CD8-positive, alpha-beta T cell (primary cell): ENCODE measurements at regions of chr10 and their contacts with region 1.

Region 1: DNA sequence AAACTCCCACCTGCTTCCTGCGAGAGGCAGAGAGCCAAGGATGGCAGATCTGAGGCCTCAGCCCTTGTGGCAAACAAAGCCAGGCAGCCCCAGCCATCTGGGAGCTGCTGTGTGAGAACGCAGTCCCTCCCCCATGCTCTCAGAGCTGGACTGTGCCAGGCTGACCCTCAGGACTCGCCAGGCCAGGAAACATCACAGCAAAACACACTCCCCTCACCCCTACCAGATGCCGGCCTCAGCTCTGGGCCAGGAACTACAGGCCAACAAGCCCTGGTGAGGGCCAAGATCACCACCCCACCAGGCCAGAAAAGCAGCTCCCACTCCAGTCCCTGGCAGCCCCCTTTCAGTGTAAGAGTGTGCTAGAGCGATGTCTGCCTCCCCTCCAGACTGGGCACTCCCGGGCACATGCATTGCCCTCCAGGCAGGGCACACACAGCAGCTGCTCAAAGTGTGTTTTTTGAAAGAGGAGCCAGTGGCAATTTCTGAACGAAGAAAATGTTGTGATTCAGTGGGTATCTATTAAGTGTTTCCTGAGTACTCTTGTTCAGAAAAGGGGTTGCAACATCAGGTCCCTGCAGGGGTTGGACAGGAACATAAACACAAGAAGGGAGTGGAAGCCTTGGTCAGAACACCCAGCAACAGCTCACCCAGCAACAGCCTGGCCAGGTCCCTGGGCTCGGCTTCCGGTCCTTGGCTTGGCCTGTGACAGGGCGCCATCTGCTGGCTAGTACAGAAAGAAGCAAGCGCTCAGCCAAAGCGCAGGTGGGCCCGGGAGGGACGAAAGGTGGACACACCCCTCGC is 18.3 kb downstream of the LRRC20 start:
- DNase-seq: peak; percentile 63 to 92 (median 85)
- ATAC-seq: peak; percentile 99
- H3K4me3 ChIP-seq: no peak overlapping the region
- H3K4me3 Mint-ChIP-seq: no peak overlapping the region
- H3K27ac ChIP-seq: no peak overlapping the region
- H3K27ac Mint-ChIP-seq: no peak overlapping the region
- H3K4me1 ChIP-seq: peaks cover 10% of the 10 kb centered on the region
- H3K4me1 Mint-ChIP-seq: peaks cover 8% of the 10 kb centered on the region
- H3K27me3 ChIP-seq: no peaks in the 10 kb centered on the region
- H3K27me3 Mint-ChIP-seq: peaks cover 2% of the 10 kb centered on the region
- CTCF ChIP-seq: peak; percentile 87

Region 2: GRCh38 chr10:70146489-70147258 is 217.5 kb before region 1 on chr10 and contains the start of gene TYSND1:
- CTCF ChIA-PET with region 1: interaction called, 10 read pairs
- POLR2A ChIA-PET with region 1: interaction called, 10 read pairs
- intact Hi-C with region 1: loop called in 1 of 2 experiments (anchors 2 kb)
- DNase-seq: peak; percentile 83 to 97 (median 91)
- ATAC-seq: peak; percentile 80
- H3K4me3 ChIP-seq: peak within 1 kb of the TSS; percentile 76 to 85
- H3K4me3 Mint-ChIP-seq: peak within 1 kb of the TSS; percentile 90
- H3K27ac ChIP-seq: peak within 1 kb of the TSS; percentile 84 to 87
- H3K27ac Mint-ChIP-seq: peak within 1 kb of the TSS; percentile 94
- H3K4me1 ChIP-seq: peaks cover 30% of the 10 kb centered on the region
- H3K4me1 Mint-ChIP-seq: peaks cover 46% of the 10 kb centered on the region
- H3K27me3 ChIP-seq: no peaks in the 10 kb centered on the region
- H3K27me3 Mint-ChIP-seq: no peaks in the 10 kb centered on the region
- CTCF ChIP-seq: peak; percentile 44
- total RNA-seq, gene TYSND1: 9.6 to 10.3 TPM

Region 3: GRCh38 chr10:70227548-70228320 is 136.4 kb before region 1 on chr10:
- CTCF ChIA-PET with region 1: interaction called, 370 read pairs
- POLR2A ChIA-PET with region 1: interaction called, 14 read pairs
- intact Hi-C with region 1: no loop called
- DNase-seq: no peak
- ATAC-seq: no peak
- H3K4me3 ChIP-seq: no peak overlapping the region
- H3K4me3 Mint-ChIP-seq: no peak overlapping the region
- H3K27ac ChIP-seq: no peak overlapping the region
- H3K27ac Mint-ChIP-seq: no peak overlapping the region
- H3K4me1 ChIP-seq: peaks cover 9% of the 10 kb centered on the region
- H3K4me1 Mint-ChIP-seq: peaks cover 35% of the 10 kb centered on the region
- H3K27me3 ChIP-seq: no peaks in the 10 kb centered on the region
- H3K27me3 Mint-ChIP-seq: no peaks in the 10 kb centered on the region
- CTCF ChIP-seq: no peak

Region 4: GRCh38 chr10:70267161-70267933 is 96.8 kb before region 1 on chr10:
- CTCF ChIA-PET with region 1: interaction called, 53 read pairs
- POLR2A ChIA-PET with region 1: no interaction called
- intact Hi-C with region 1: loop called (anchors 1 to 2 kb)
- DNase-seq: peak in 3 of 9 experiments; percentile 14 to 19 (median 14)
- ATAC-seq: no peak
- H3K4me3 ChIP-seq: no peak overlapping the region
- H3K4me3 Mint-ChIP-seq: no peak overlapping the region
- H3K27ac ChIP-seq: no peak overlapping the region
- H3K27ac Mint-ChIP-seq: peak overlapping the region; percentile 55
- H3K4me1 ChIP-seq: no peaks in the 10 kb centered on the region
- H3K4me1 Mint-ChIP-seq: peaks cover under 1% of the 10 kb centered on the region
- H3K27me3 ChIP-seq: no peaks in the 10 kb centered on the region
- H3K27me3 Mint-ChIP-seq: peaks cover 3% of the 10 kb centered on the region
- CTCF ChIP-seq: no peak

Region 5: GRCh38 chr10:70341016-70341415 is 23.2 kb before region 1 on chr10:
- CTCF ChIA-PET with region 1: interaction called, 12 read pairs
- POLR2A ChIA-PET with region 1: no interaction called
- intact Hi-C with region 1: no loop called
- DNase-seq: no peak
- ATAC-seq: no peak
- H3K4me3 ChIP-seq: no peak overlapping the region
- H3K4me3 Mint-ChIP-seq: no peak overlapping the region
- H3K27ac ChIP-seq: no peak overlapping the region
- H3K27ac Mint-ChIP-seq: no peak overlapping the region
- H3K4me1 ChIP-seq: no peaks in the 10 kb centered on the region
- H3K4me1 Mint-ChIP-seq: no peaks in the 10 kb centered on the region
- H3K27me3 ChIP-seq: no peaks in the 10 kb centered on the region
- H3K27me3 Mint-ChIP-seq: no peaks in the 10 kb centered on the region
- CTCF ChIP-seq: no peak

Region 6: DNA sequence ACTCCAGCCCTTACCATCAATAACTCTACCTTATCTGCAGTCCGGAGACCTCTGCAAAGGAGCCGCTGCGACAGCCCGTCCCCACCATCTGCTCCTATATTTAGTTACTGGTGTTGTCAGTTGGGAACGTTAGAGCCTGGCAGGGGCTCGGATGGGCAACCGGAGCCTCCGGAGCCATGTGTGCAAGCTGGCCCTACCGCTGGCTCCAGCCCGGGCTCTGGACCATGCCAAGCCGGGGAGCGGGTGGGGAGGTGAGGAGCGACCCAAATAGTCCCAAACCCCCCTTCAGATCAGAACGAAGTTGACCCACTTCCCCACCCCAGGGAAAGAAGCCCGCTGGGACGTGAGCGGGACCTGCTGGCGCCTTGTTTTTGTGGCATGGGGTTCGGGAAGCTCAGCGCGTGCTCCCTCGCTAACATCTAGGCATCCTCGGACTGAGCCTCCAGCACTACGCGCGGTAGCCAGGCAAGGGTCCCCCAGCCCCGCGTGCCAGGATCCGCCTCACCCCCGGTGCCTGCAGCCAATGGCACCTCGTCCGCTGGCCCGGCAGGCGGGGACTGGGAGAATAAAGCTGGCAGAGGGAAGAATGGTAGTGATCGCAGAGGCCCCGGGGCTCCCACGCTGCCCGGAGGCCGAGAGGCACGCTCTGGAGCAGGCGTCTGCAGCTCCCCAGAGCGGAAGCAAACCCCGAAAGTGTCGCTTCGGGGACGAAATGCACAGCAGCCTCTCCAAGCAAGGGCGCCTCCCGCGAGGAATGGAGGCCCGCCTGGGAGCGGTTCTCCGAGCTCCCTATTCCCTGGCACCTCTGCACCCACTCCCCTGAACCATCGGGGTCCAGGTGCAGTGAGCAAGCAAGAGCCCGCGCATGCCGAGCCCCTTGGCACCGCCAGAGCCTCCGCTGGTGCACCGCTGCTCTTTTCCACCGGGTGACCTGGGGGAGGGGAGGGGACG is 17.6 kb after region 1 on chr10:
- CTCF ChIA-PET with region 1: interaction called, 45 read pairs
- POLR2A ChIA-PET with region 1: no interaction called
- intact Hi-C with region 1: no loop called
- DNase-seq: peak in 4 of 9 experiments; percentile 20 to 57 (median 30)
- ATAC-seq: peak; percentile 37
- H3K4me3 ChIP-seq: peak overlapping the region; percentile 79 to 86
- H3K4me3 Mint-ChIP-seq: peak overlapping the region; percentile 87
- H3K27ac ChIP-seq: no peak overlapping the region
- H3K27ac Mint-ChIP-seq: no peak overlapping the region
- H3K4me1 ChIP-seq: peaks cover 8% of the 10 kb centered on the region
- H3K4me1 Mint-ChIP-seq: peaks cover 10% of the 10 kb centered on the region
- H3K27me3 ChIP-seq: no peaks in the 10 kb centered on the region
- H3K27me3 Mint-ChIP-seq: peaks cover 2% of the 10 kb centered on the region
- CTCF ChIP-seq: no peak